ENCODE measurements at regions of chr2 and their contacts with region 1.

Region 1: GRCh38 chr2:73828818-73829570 is at the start of gene STAMBP:
- DNase-seq: peak; percentile 67 to 95 (median 86)
- ATAC-seq: peak; percentile 96
- H3K4me3 ChIP-seq: peak within 1 kb of the TSS; percentile 81
- H3K4me3 Mint-ChIP-seq: peak within 1 kb of the TSS; percentile 93 to 99 (median 97)
- H3K27ac ChIP-seq: peak within 1 kb of the TSS; percentile 97
- H3K27ac Mint-ChIP-seq: peak within 1 kb of the TSS; percentile 88 to 99 (median 95)
- H3K4me1 ChIP-seq: peaks cover 22 to 25% of the 10 kb centered on the region in 2 donors
- H3K4me1 Mint-ChIP-seq: peaks cover 24 to 58% (median 52%) of the 10 kb centered on the region in 7 donors
- H3K27me3 ChIP-seq: no peaks in the 10 kb centered on the region
- H3K27me3 Mint-ChIP-seq: peaks cover 0 to 3% (median 0%) of the 10 kb centered on the region in 5 donors
- total RNA-seq, gene STAMBP: 22.2 to 44.5 (median 32.9) TPM

Region 2: GRCh38 chr2:73779467-73780236 is 49.3 kb before region 1 on chr2 and contains the start of gene DUSP11:
- CTCF ChIA-PET with region 1: interaction called, 4 read pairs
- POLR2A ChIA-PET with region 1: interaction called, 3 read pairs
- intact Hi-C with region 1: loop called (anchors 1 kb)
- DNase-seq: peak; percentile 92 to 98 (median 95)
- ATAC-seq: peak; percentile 100
- H3K4me3 ChIP-seq: peak within 1 kb of the TSS; percentile 87
- H3K4me3 Mint-ChIP-seq: peak within 1 kb of the TSS; percentile 95 to 100 (median 98)
- H3K27ac ChIP-seq: peak within 1 kb of the TSS; percentile 95
- H3K27ac Mint-ChIP-seq: peak within 1 kb of the TSS; percentile 95 to 100 (median 98)
- H3K4me1 ChIP-seq: peaks cover 0 to 16% of the 10 kb centered on the region in 2 donors
- H3K4me1 Mint-ChIP-seq: peaks cover 23 to 49% (median 35%) of the 10 kb centered on the region in 7 donors
- H3K27me3 ChIP-seq: no peaks in the 10 kb centered on the region
- H3K27me3 Mint-ChIP-seq: peaks cover 0 to 4% (median 4%) of the 10 kb centered on the region in 5 donors
- total RNA-seq, gene DUSP11: 32.0 to 54.1 (median 43.8) TPM

Region 3: DNA sequence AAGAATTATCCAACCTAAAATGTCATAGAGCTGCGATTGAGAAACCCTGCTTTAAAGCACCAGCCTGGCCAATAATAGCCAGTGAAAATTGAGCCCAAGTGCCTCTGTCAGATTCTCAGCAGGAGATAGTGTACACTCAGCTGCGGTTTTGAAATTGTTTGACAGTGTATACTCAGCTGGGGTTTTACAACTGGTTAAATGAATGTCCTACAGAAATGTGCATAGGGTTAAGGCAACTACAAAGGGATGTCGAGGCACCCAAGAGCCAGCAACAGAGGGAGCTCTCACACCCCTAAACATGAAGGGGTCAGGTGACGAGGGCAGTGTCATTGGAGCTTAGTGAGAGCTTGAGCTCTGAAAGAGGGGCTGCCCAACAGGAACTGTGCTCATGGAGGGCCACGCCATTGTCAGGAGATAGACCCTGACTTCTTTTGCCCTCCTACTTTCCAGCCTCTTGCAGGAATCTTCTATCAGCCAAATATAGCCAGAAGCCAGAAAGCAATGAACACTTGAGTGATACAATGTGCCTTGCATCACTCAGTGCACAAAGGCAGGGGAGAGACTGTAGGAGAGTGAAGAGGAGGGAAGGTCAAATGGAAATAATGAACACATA is 79.0 kb after region 1 on chr2:
- CTCF ChIA-PET with region 1: interaction called, 13 read pairs
- POLR2A ChIA-PET with region 1: no interaction called
- intact Hi-C with region 1: no loop called
- DNase-seq: peak in 8 of 9 donors; percentile 37 to 64 (median 48)
- ATAC-seq: peak; percentile 92
- H3K4me3 ChIP-seq: no peak overlapping the region
- H3K4me3 Mint-ChIP-seq: no peak overlapping the region
- H3K27ac ChIP-seq: no peak overlapping the region
- H3K27ac Mint-ChIP-seq: peak overlapping the region in 4 of 9 donors; percentile 19 to 61 (median 40)
- H3K4me1 ChIP-seq: no peaks in the 10 kb centered on the region
- H3K4me1 Mint-ChIP-seq: peaks cover 0 to 3% (median 0%) of the 10 kb centered on the region in 7 donors
- H3K27me3 ChIP-seq: no peaks in the 10 kb centered on the region
- H3K27me3 Mint-ChIP-seq: no peaks in the 10 kb centered on the region

Region 4: GRCh38 chr2:74104839-74105238 is 275.8 kb after region 1 on chr2:
- CTCF ChIA-PET with region 1: interaction called, 10 read pairs
- POLR2A ChIA-PET with region 1: no interaction called
- intact Hi-C with region 1: loop called in 1 of 2 experiments (anchors 1 kb)
- DNase-seq: peak in 3 of 9 donors; percentile 13 to 29 (median 27)
- ATAC-seq: no peak
- H3K4me3 ChIP-seq: no peak overlapping the region
- H3K4me3 Mint-ChIP-seq: no peak overlapping the region
- H3K27ac ChIP-seq: no peak overlapping the region
- H3K27ac Mint-ChIP-seq: peak overlapping the region in 2 of 9 donors; percentile 3 to 67
- H3K4me1 ChIP-seq: no peaks in the 10 kb centered on the region
- H3K4me1 Mint-ChIP-seq: peaks cover 0 to 6% (median 0%) of the 10 kb centered on the region in 7 donors
- H3K27me3 ChIP-seq: no peaks in the 10 kb centered on the region
- H3K27me3 Mint-ChIP-seq: no peaks in the 10 kb centered on the region

Region 5: GRCh38 chr2:74178201-74179062 is 349.4 kb after region 1 on chr2 and contains the start of gene MOB1A:
- CTCF ChIA-PET with region 1: interaction called, 4 read pairs
- POLR2A ChIA-PET with region 1: interaction called, 6 read pairs
- intact Hi-C with region 1: loop called in 1 of 2 experiments (anchors 1 kb)
- DNase-seq: peak; percentile 94 to 98 (median 97)
- ATAC-seq: peak; percentile 97
- H3K4me3 ChIP-seq: peak within 1 kb of the TSS; percentile 89
- H3K4me3 Mint-ChIP-seq: peak within 1 kb of the TSS; percentile 86 to 95 (median 91)
- H3K27ac ChIP-seq: peak within 1 kb of the TSS; percentile 97
- H3K27ac Mint-ChIP-seq: peak within 1 kb of the TSS; percentile 82 to 95 (median 90)
- H3K4me1 ChIP-seq: peaks cover 25 to 37% of the 10 kb centered on the region in 2 donors
- H3K4me1 Mint-ChIP-seq: peaks cover 32 to 46% (median 35%) of the 10 kb centered on the region in 7 donors
- H3K27me3 ChIP-seq: no peaks in the 10 kb centered on the region
- H3K27me3 Mint-ChIP-seq: no peaks in the 10 kb centered on the region
- total RNA-seq, gene MOB1A: 113 to 185 (median 140) TPM

Region 6: DNA sequence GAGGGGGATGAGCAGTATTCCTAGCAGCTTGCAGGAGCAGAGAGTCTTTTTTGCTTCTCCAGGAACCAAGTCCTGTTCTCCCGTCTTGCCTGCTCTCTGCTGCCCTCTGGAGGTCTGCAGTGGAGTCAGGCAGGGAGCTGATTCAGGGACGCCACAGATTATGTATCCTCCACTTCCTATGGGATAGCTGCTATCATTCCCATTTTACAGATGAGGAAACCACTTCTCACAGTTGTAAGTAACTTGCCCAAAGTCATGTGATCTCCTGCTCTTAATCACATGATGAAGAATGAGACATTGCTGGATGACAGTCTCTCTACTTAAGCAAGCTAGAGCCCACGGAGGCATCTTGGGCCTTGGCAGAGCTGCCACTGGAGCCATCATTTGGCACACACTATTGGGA is 505.9 kb after region 1 on chr2:
- CTCF ChIA-PET with region 1: interaction called, 50 read pairs
- POLR2A ChIA-PET with region 1: no interaction called
- intact Hi-C with region 1: loop called (anchors 1 kb)
- DNase-seq: peak; percentile 36 to 81 (median 67)
- ATAC-seq: peak; percentile 90
- H3K4me3 ChIP-seq: no peak overlapping the region
- H3K4me3 Mint-ChIP-seq: no peak overlapping the region
- H3K27ac ChIP-seq: no peak overlapping the region
- H3K27ac Mint-ChIP-seq: peak overlapping the region in 2 of 9 donors; percentile 62 to 77
- H3K4me1 ChIP-seq: peaks cover 0 to 5% of the 10 kb centered on the region in 2 donors
- H3K4me1 Mint-ChIP-seq: peaks cover 0 to 14% (median 4%) of the 10 kb centered on the region in 7 donors
- H3K27me3 ChIP-seq: no peaks in the 10 kb centered on the region
- H3K27me3 Mint-ChIP-seq: peaks cover 0 to 2% (median 0%) of the 10 kb centered on the region in 5 donors

Region 7: DNA sequence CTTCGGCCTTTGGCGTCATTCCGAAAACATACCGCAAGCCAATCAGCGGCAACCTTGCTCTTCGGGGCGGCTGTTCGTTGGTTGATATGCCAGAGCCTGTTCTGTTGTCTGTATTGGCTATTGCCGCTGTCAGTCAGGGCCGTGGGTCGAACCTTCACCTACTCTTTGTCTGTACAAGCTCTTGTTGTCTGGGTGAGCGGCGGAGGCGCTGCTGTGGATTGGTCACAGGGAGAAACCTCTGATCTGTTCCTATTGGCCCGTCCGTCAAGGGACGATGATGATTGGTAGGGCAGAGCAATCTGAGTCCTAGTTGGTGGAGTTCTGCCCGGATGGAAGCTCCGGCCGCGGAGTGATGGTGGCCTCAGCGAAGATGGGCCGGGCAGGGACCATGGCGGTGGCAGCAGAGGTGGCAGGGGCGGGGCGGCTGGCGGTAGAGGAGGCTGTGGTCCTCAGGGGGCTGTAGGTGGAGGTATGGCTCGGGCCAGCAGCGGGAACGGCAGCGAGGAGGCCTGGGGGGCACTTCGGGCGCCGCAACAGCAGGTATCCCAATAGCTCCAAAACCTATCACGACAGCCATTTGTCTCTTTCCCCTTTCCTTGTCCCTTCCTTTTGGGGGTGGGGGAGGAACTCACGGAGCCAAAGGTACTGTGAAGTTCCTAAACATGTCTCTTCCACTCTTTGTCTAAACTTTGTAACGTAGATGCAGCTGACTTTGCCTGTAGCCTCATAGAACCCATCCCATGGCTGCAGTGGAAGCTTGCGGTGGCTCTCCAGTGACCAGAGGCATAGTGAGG is 629.3 kb after region 1 on chr2 and contains the start of gene WBP1:
- CTCF ChIA-PET with region 1: interaction called, 3 read pairs
- POLR2A ChIA-PET with region 1: no interaction called
- intact Hi-C with region 1: loop called in 1 of 2 experiments (anchors 1 kb)
- DNase-seq: peak in 8 of 9 donors; percentile 85 to 100 (median 100)
- ATAC-seq: peak; percentile 89
- H3K4me3 ChIP-seq: peak within 1 kb of the TSS; percentile 70
- H3K4me3 Mint-ChIP-seq: peak within 1 kb of the TSS; percentile 87 to 99 (median 96)
- H3K27ac ChIP-seq: peak within 1 kb of the TSS; percentile 100
- H3K27ac Mint-ChIP-seq: peak within 1 kb of the TSS; percentile 88 to 100 (median 99)
- H3K4me1 ChIP-seq: peaks cover 30 to 34% of the 10 kb centered on the region in 2 donors
- H3K4me1 Mint-ChIP-seq: peaks cover 38 to 68% (median 58%) of the 10 kb centered on the region in 7 donors
- H3K27me3 ChIP-seq: no peaks in the 10 kb centered on the region
- H3K27me3 Mint-ChIP-seq: peaks cover 0 to 2% (median 0%) of the 10 kb centered on the region in 5 donors
- total RNA-seq, gene WBP1: 53.6 to 127 (median 85.4) TPM

Measured in naive thymus-derived CD4-positive, alpha-beta T cell (primary cell).